ENCODE measurements at regions of chr14 and their contacts with region 1.

Region 1: DNA sequence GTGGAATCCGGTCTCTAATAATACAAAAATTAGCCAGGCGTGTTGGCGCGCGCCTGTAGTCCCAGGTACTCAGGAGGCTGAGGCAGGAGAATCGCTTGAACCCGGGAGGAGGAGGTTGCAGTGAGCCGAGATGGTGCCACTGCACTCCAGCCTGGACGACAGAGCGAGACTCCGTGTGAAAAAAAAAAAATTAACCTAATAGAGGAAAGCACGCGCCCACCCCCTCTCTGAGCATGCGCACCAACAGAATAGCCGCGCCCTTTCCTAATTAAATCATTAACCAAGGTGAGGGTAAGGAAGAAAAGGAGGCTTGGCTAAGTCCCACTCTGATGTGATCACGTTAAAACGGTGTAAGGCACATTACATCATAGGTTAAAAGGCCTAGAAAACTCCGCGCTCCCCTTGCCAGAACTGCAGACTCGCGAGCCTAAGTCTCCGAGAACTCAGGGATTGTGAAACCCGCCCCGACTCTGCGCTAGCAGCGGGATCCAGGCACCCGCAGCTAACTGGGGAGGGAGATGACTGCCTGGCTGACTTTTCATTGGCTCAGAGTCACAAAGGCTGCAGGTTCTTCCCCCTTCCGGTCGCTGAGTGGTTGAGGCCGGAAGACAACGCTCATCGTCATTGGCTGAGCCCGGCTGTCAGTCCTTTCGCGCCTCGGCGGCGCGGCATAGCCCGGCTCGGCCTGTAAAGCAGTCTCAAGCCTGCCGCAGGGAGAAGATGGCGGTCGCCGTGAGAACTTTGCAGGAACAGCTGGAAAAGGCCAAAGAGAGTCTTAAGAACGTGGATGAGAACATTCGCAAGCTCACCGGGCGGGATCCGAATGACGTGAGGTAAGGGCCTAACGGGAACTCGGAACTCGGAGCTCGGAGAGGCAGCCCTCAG is at the start of gene PNN:
- DNase-seq: peak; percentile 91 to 100 (median 93)
- ATAC-seq: peak; percentile 85
- H3K4me3 ChIP-seq: peak within 1 kb of the TSS; percentile 96
- H3K4me3 Mint-ChIP-seq: peak within 1 kb of the TSS; percentile 97
- H3K27ac ChIP-seq: peak within 1 kb of the TSS; percentile 89 to 95
- H3K27ac Mint-ChIP-seq: peak within 1 kb of the TSS; percentile 96
- H3K4me1 ChIP-seq: peaks cover 36% of the 10 kb centered on the region
- H3K4me1 Mint-ChIP-seq: peaks cover 59% of the 10 kb centered on the region
- H3K27me3 ChIP-seq: no peaks in the 10 kb centered on the region
- H3K27me3 Mint-ChIP-seq: no peaks in the 10 kb centered on the region
- CTCF ChIP-seq: no peak
- total RNA-seq, gene PNN: 110 to 111 TPM

Region 2: DNA sequence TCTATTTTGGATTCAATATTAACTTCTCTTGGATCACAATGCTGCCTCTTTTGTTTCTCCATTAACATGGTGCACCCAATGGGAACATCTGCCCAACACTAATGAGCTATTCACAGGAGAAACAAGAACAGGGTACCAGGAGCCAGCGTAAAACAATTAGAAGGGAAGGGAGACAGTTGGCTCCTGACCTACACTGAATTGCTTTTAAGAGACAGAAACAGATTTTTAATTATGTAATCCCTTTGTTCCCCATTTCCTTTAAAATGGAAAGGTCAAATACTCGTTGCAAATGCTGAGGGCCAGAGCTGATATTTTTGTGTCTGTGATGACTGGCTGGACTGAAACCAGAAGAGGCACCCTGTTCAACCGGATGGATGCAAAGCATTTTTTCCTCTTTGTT is 180.1 kb before region 1 on chr14:
- CTCF ChIA-PET with region 1: no interaction called
- POLR2A ChIA-PET with region 1: no interaction called
- intact Hi-C with region 1: no loop called
- DNase-seq: no peak
- ATAC-seq: no peak
- H3K4me3 ChIP-seq: no peak overlapping the region
- H3K4me3 Mint-ChIP-seq: no peak overlapping the region
- H3K27ac ChIP-seq: no peak overlapping the region
- H3K27ac Mint-ChIP-seq: no peak overlapping the region
- H3K4me1 ChIP-seq: no peaks in the 10 kb centered on the region
- H3K4me1 Mint-ChIP-seq: no peaks in the 10 kb centered on the region
- H3K27me3 ChIP-seq: peaks cover 0 to 3% of the 10 kb centered on the region in 2 experiments
- H3K27me3 Mint-ChIP-seq: no peaks in the 10 kb centered on the region
- CTCF ChIP-seq: no peak

Region 3: DNA sequence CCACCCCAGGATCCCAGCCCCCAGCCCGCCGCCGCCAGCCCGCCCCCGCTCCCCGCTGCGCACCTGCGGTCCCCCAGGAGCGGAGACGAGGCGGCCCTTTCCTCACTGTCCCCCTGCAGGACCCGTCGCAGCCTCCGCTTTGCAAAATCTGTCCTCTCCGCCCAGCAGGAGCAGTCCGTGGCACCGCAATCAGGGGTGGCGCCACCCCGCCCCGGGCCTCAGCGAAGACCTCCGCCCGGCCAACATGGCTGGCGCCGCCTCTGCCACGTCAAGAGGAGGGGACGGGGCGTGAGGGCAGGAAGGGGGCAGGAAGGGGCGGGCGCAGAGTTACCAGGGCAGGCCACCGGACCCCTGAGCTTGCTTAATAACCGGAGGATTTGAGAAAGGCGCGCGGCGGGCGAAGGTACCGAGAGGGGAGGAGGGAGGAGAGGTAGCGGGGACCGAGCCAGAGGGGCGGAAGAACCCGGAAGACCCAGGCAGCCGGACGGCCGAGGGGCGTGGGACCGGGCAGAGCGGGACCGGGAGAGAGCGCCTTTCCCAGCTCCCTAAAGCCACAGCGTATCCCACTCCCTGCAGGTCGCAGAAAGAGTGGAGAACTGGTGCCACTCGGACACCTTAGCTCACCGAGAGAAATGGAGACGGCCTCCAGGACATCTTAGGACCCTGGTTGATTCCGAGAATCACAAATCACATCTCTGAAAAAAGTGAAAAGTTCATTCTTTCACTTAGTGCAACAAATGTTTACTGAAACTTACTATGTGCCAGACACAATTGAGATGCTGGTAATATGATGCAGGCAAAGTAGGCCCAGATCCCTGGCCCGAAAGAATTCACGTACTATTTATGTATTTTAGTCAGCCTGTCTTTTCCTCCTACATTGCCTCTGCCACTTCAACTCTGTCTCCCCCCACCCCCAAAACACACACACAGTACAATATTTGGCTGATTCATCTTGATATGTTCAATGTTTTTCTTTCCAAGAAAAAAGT is 71.5 kb before region 1 on chr14 and contains the start of gene SEC23A:
- CTCF ChIA-PET with region 1: interaction called, 3 read pairs
- POLR2A ChIA-PET with region 1: interaction called, 28 read pairs
- intact Hi-C with region 1: loop called in 1 of 2 experiments (anchors 5 kb)
- DNase-seq: peak; percentile 62 to 91 (median 78)
- ATAC-seq: peak; percentile 95
- H3K4me3 ChIP-seq: peak within 1 kb of the TSS; percentile 100
- H3K4me3 Mint-ChIP-seq: peak within 1 kb of the TSS; percentile 98
- H3K27ac ChIP-seq: peak within 1 kb of the TSS; percentile 83 to 96
- H3K27ac Mint-ChIP-seq: peak within 1 kb of the TSS; percentile 98
- H3K4me1 ChIP-seq: peaks cover 34% of the 10 kb centered on the region
- H3K4me1 Mint-ChIP-seq: peaks cover 56% of the 10 kb centered on the region
- H3K27me3 ChIP-seq: no peaks in the 10 kb centered on the region
- H3K27me3 Mint-ChIP-seq: no peaks in the 10 kb centered on the region
- CTCF ChIP-seq: no peak
- total RNA-seq, gene SEC23A: 68.4 to 82.1 TPM

Region 4: DNA sequence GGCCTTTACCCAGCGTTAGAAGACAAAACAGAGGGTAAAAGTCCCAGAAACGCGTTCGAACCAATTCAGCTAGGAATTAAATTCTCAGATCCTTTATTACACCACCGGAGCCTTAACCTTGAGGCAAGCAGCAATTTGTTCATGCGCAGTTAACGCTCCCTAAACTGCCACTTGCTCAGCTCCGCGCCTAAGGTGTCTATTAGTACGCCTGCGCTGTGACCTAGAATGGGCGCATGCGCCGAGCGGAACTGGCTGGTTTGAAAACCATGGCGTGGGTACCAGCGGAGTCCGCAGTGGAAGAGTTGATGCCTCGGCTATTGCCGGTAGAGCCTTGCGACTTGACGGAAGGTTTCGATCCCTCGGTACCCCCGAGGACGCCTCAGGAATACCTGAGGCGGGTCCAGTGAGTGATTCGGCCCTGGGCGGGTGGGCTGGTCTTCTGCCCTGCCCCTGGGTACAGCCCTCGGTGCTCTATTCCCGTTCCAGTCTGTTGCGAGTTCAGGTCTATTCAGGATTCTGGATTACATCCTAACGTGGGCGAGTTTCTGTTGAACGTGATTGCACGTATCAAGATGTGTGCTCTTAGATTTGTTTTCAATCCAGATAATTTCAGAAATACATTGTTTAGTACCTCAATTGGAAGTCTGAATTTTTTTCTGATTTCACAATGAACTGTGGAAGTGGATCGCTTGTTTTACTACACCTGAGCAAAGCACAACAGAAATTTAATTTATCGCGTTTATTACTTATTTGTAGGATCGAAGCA is 60.5 kb before region 1 on chr14 and contains the start of gene GEMIN2:
- CTCF ChIA-PET with region 1: interaction called, 3 read pairs
- POLR2A ChIA-PET with region 1: interaction called, 19 read pairs
- intact Hi-C with region 1: loop called (anchors 2 kb)
- DNase-seq: peak; percentile 85 to 98 (median 92)
- ATAC-seq: peak; percentile 98
- H3K4me3 ChIP-seq: peak within 1 kb of the TSS; percentile 72
- H3K4me3 Mint-ChIP-seq: peak within 1 kb of the TSS; percentile 99
- H3K27ac ChIP-seq: peak within 1 kb of the TSS; percentile 55 to 65
- H3K27ac Mint-ChIP-seq: peak within 1 kb of the TSS; percentile 91
- H3K4me1 ChIP-seq: peaks cover 6% of the 10 kb centered on the region
- H3K4me1 Mint-ChIP-seq: peaks cover 17% of the 10 kb centered on the region
- H3K27me3 ChIP-seq: no peaks in the 10 kb centered on the region
- H3K27me3 Mint-ChIP-seq: no peaks in the 10 kb centered on the region
- CTCF ChIP-seq: no peak
- total RNA-seq, gene GEMIN2: 14.6 to 16.1 TPM

Region 5: DNA sequence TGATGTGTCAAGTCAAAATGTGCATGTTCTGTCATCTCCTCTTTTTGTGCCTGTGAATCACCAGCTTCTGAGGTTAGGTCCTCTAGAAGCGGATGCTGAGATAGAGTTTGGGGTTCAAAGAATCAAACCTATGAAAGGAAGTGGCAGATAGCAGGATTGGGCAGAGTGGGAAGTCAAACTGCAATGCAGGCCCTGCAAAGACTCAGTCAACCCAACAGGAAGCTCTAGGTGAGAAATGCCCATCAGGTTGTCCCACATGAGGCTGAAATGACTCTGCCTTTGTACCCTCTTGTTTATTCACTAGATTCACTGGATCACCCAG is 54.4 kb after region 1 on chr14:
- CTCF ChIA-PET with region 1: interaction called, 4 read pairs
- POLR2A ChIA-PET with region 1: interaction called, 13 read pairs
- intact Hi-C with region 1: loop called (anchors 5 kb)
- DNase-seq: peak in 12 of 14 experiments; percentile 7 to 90 (median 34)
- ATAC-seq: peak; percentile 91
- H3K4me3 ChIP-seq: no peak overlapping the region
- H3K4me3 Mint-ChIP-seq: no peak overlapping the region
- H3K27ac ChIP-seq: peak overlapping the region; percentile 44 to 78
- H3K27ac Mint-ChIP-seq: peak overlapping the region; percentile 57
- H3K4me1 ChIP-seq: peaks cover 24% of the 10 kb centered on the region
- H3K4me1 Mint-ChIP-seq: peaks cover 35% of the 10 kb centered on the region
- H3K27me3 ChIP-seq: no peaks in the 10 kb centered on the region
- H3K27me3 Mint-ChIP-seq: no peaks in the 10 kb centered on the region
- CTCF ChIP-seq: no peak

Region 6: GRCh38 chr14:39291701-39292100 is 116.9 kb after region 1 on chr14:
- CTCF ChIA-PET with region 1: no interaction called
- POLR2A ChIA-PET with region 1: no interaction called
- intact Hi-C with region 1: no loop called
- DNase-seq: no peak
- ATAC-seq: no peak
- H3K4me3 ChIP-seq: no peak overlapping the region
- H3K4me3 Mint-ChIP-seq: no peak overlapping the region
- H3K27ac ChIP-seq: no peak overlapping the region
- H3K27ac Mint-ChIP-seq: peak overlapping the region; percentile 6
- H3K4me1 ChIP-seq: no peaks in the 10 kb centered on the region
- H3K4me1 Mint-ChIP-seq: peaks cover 6% of the 10 kb centered on the region
- H3K27me3 ChIP-seq: no peaks in the 10 kb centered on the region
- H3K27me3 Mint-ChIP-seq: no peaks in the 10 kb centered on the region
- CTCF ChIP-seq: no peak

Measured in CD4-positive, alpha-beta T cell (primary cell).